ENCODE measurements at regions of chr9 and their contacts with region 1.

Region 1: DNA sequence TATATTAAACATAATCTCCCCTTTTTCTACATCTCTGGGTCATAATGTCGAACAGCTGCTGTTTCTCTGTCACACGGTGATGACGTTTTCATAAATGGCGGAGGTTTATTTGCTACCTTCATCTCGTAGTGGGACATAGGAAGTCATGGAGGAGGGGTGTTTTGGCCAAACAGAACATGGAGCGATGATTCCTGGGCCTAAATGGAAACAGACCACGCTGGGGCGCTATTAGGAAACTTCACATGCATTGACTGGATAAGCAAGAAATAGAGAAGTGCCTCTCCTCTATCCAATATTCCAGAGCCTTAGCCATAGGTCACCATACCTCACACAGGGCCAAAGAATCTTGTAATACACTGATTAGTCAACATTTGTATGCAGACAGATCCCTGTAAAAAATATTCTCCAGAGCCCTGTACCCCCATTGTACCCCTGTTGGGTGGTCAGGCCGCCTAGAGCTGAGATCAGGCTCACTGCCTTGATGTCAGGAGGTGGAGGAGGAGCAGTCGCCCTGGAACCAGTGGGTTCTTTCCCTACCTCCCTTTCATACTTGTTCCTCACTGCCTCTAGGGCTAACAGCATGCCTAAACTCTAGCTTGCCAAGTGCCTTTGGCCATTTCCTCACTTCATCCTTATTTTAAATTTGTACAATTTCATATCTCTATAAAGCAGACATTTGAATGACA is 77.8 kb upstream of the SPIN1 start:
- DNase-seq: peak; percentile 11 to 34 (median 19)
- ATAC-seq: peak; percentile 71
- H3K4me3 ChIP-seq: no peak overlapping the region
- H3K27ac ChIP-seq: no peak overlapping the region
- H3K4me1 ChIP-seq: no peaks in the 10 kb centered on the region; a peak in 1 of 5 replicates
- H3K27me3 ChIP-seq: peaks cover 0 to 11% of the 10 kb centered on the region in 2 experiments; a peak in 1 of 5 replicates
- CTCF ChIP-seq: peak; percentile 15 to 30 (median 18); a peak in 3 of 6 replicates
- EP300 ChIP-seq: no peak
- POLR2A ChIP-seq: no peak
- RAD21 ChIP-seq: peak; percentile 22 to 37; a peak in 2 of 4 replicates

Region 2: DNA sequence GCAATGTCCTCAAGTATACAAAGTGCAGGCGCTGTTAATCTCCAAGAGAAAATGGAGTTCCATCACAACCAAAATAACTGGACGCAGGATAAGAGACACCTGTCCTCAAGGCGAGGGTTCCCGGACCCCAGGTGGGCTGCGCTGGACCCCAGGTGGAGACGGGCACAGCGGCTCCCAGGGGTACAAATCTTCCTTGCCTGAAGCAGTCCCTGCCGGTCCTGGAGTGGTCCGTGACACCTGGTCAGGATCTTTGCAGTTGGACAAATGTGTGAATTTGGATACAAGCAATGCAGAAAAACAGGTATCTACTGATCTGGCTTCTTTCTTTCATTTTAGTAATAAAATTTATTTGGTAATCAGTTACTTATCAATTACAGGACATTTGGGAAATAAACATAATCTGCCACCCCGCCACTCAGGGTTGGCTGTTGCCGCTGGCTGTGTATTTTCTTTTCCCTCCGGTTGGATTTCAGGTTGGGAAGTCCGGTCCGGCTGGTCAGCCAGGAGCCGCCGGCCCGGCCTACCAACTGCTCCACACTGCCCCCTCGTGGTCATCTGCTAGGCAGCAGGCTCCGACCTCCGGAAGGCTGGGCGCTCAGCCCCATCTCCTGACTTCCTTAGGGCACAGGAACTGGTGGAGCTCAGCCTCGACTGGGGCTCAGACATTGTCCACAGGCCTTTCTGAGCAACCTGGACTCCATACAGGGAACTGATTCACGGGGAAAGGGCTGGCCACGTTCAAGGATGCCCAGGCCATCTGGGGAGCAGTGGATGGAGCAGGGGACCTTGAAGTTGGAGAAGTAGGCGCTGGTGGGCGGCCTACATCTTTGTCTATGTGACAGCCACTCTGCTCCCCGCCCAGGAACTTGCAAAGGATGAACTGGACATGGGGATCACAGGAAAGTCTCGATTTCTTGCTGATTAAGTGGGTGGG is 267.9 kb after region 1 on chr9:
- CTCF ChIA-PET with region 1: no interaction called
- POLR2A ChIA-PET with region 1: no interaction called
- in situ Hi-C with region 1: no loop called
- intact Hi-C with region 1: loop called (anchors 5 kb)
- DNase-seq: peak; percentile 67 to 79 (median 76)
- ATAC-seq: peak; percentile 94
- H3K4me3 ChIP-seq: no peak overlapping the region
- H3K27ac ChIP-seq: no peak overlapping the region
- H3K4me1 ChIP-seq: peaks cover 0 to 7% of the 10 kb centered on the region in 2 experiments; a peak in 1 of 5 replicates
- H3K27me3 ChIP-seq: peaks cover 0 to 23% of the 10 kb centered on the region in 2 experiments; a peak in 4 of 5 replicates
- CTCF ChIP-seq: peak; percentile 70 to 95 (median 86)
- EP300 ChIP-seq: no peak
- POLR2A ChIP-seq: no peak
- RAD21 ChIP-seq: peak; percentile 72 to 82

Measured in K562 (cell line).